MCF 10A (cell line): ENCODE measurements at regions of chr15 and their contacts with region 1.

Region 1: GRCh38 chr15:39391230-39391629 is 189.6 kb upstream of the THBS1 start:
- DNase-seq: peak; percentile 100
- H3K4me3 Mint-ChIP-seq: no peak overlapping the region
- H3K27ac Mint-ChIP-seq: peak overlapping the region; percentile 12
- H3K4me1 Mint-ChIP-seq: peaks cover 27% of the 10 kb centered on the region
- H3K27me3 Mint-ChIP-seq: no peaks in the 10 kb centered on the region
- CTCF ChIP-seq: no peak

Region 2: GRCh38 chr15:39188925-39189324 is 202.3 kb before region 1 on chr15:
- CTCF ChIA-PET with region 1: interaction called, 3 read pairs
- POLR2A ChIA-PET with region 1: interaction called, 12 read pairs
- intact Hi-C with region 1: no loop called
- DNase-seq: peak; percentile 97
- H3K4me3 Mint-ChIP-seq: peak overlapping the region; percentile 16
- H3K27ac Mint-ChIP-seq: peak overlapping the region; percentile 74
- H3K4me1 Mint-ChIP-seq: peaks cover 52% of the 10 kb centered on the region
- H3K27me3 Mint-ChIP-seq: no peaks in the 10 kb centered on the region
- CTCF ChIP-seq: no peak

Region 3: GRCh38 chr15:39376371-39376909 is 14.8 kb before region 1 on chr15:
- CTCF ChIA-PET with region 1: interaction called, 4 read pairs
- POLR2A ChIA-PET with region 1: interaction called, 14 read pairs
- intact Hi-C with region 1: no loop called
- DNase-seq: peak; percentile 29
- H3K4me3 Mint-ChIP-seq: no peak overlapping the region
- H3K27ac Mint-ChIP-seq: no peak overlapping the region
- H3K4me1 Mint-ChIP-seq: peaks cover 16% of the 10 kb centered on the region
- H3K27me3 Mint-ChIP-seq: no peaks in the 10 kb centered on the region
- CTCF ChIP-seq: no peak

Region 4: DNA sequence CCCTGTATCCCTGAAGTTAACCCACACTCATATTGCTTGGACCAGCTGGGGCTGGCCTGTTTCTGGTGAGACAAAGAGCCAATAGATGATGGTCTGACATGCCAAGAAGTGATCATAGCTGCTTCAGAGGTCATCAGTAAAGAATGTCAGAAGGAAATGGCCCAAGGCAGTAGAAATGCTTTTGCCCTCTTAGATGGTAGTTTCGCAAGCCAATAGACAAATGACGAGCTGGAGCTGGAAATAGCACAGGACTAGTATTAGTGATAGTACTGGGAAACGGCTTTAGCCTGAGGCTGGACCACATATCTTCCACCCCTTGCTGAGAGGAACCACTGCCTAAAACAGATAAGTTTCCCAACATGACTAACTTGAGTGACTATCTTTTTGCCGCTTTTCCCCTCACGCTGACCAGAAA is 13.5 kb after region 1 on chr15:
- CTCF ChIA-PET with region 1: interaction called, 6 read pairs
- POLR2A ChIA-PET with region 1: interaction called, 27 read pairs
- intact Hi-C with region 1: no loop called
- DNase-seq: peak; percentile 97
- H3K4me3 Mint-ChIP-seq: no peak overlapping the region
- H3K27ac Mint-ChIP-seq: no peak overlapping the region
- H3K4me1 Mint-ChIP-seq: peaks cover 22% of the 10 kb centered on the region
- H3K27me3 Mint-ChIP-seq: no peaks in the 10 kb centered on the region
- CTCF ChIP-seq: no peak

Region 5: DNA sequence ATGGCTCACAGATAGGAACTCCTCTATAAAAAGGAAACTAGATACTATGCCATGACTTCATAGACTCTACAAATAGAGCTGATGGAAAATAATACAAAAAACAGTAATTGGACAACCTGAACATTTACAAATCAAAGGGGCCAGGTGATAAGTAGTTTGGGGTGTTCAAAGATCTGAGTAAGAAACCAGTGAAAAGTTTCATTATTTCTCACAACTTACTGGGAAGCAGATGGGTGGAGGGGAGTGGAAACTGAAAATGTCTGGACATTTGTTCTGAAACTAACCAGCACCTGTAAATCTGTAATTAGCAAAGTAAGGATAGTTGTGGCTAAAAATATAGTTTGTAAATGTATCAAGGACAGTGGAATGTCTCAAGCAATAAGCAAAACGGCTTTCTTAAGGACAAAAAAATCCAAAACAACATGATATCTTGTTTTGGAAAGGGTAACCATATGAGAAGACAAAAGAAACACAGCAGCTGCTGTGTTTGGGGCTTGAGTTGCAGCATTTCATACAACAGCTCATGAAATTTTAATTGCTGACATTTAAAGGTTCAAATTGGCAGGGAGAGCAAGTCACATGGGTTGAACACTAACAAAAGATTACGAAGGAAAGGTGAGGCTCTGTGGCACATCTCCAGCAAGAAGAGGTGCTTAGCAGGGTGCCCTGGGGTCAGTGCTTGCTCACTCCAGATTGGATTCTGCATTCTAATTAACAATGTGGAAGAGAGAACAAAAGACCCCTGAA is 162.9 kb after region 1 on chr15:
- CTCF ChIA-PET with region 1: no interaction called
- POLR2A ChIA-PET with region 1: interaction called, 14 read pairs
- intact Hi-C with region 1: no loop called
- DNase-seq: peak; percentile 78
- H3K4me3 Mint-ChIP-seq: peak overlapping the region; percentile 22
- H3K27ac Mint-ChIP-seq: peak overlapping the region; percentile 50
- H3K4me1 Mint-ChIP-seq: peaks cover 39% of the 10 kb centered on the region
- H3K27me3 Mint-ChIP-seq: no peaks in the 10 kb centered on the region
- CTCF ChIP-seq: no peak